Colonic mucosa (tissue), 4 donors: ENCODE measurements at regions of chr11 and their contacts with region 1.

Region 1: GRCh38 chr11:59295435-59295834 is 63.3 kb upstream of the OR5AN1 start:
- DNase-seq: no peak
- H3K4me3 ChIP-seq: no peak overlapping the region
- H3K27ac ChIP-seq: no peak overlapping the region
- H3K4me1 ChIP-seq: no peaks in the 10 kb centered on the region
- H3K27me3 ChIP-seq: no peaks in the 10 kb centered on the region
- CTCF ChIP-seq: no peak

Region 2: GRCh38 chr11:58719406-58720117 is 575.9 kb before region 1 on chr11:
- intact Hi-C with region 1: loop called (anchors 10 kb)
- DNase-seq: no peak
- H3K4me3 ChIP-seq: no peak overlapping the region
- H3K27ac ChIP-seq: no peak overlapping the region
- H3K4me1 ChIP-seq: no peaks in the 10 kb centered on the region
- H3K27me3 ChIP-seq: no peaks in the 10 kb centered on the region
- CTCF ChIP-seq: no peak